ENCODE measurements at regions of chr11 and their contacts with region 1.

Region 1: GRCh38 chr11:95138448-95138847 is 48.8 kb downstream of the ENDOD1 start:
- DNase-seq: no peak
- H3K4me3 ChIP-seq: no peak overlapping the region
- H3K27ac ChIP-seq: no peak overlapping the region
- H3K4me1 ChIP-seq: peaks cover 0 to 5% (median 2%) of the 10 kb centered on the region in 4 donors
- H3K27me3 ChIP-seq: no peaks in the 10 kb centered on the region
- CTCF ChIP-seq: peak in 3 of 5 experiments; percentile 22 to 40 (median 29)
- EP300 ChIP-seq: no peak
- POLR2A ChIP-seq: no peak

Region 2: GRCh38 chr11:94997437-94997836 is 141.0 kb before region 1 on chr11:
- in situ Hi-C with region 1: loop called in 1 of 4 experiments (anchors 25 kb)
- intact Hi-C with region 1: no loop called
- DNase-seq: no peak
- H3K4me3 ChIP-seq: no peak overlapping the region
- H3K27ac ChIP-seq: no peak overlapping the region
- H3K4me1 ChIP-seq: no peaks in the 10 kb centered on the region
- H3K27me3 ChIP-seq: no peaks in the 10 kb centered on the region
- CTCF ChIP-seq: no peak
- EP300 ChIP-seq: no peak
- POLR2A ChIP-seq: no peak

Region 3: DNA sequence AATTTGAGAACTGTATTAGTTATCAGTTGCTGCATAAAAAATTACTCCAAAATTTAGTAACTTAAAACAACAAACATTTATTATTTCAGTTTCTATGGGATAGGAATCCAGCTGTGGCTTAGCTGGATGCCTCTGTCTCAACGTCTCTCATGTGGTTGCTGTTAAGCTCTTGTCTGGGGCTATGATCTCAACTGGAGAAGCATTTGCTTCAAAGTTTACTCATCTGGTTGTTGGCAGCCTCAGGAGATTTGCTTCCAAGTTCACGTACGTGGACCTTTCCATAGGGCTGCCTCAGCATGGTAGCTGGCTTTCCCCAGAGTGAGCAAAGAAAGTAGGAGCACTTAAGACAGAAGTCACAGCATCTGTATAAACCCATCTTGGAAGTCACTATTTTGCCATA is 237.4 kb after region 1 on chr11:
- in situ Hi-C with region 1: no loop called
- intact Hi-C with region 1: no loop called
- DNase-seq: no peak
- H3K4me3 ChIP-seq: no peak overlapping the region
- H3K27ac ChIP-seq: no peak overlapping the region
- H3K4me1 ChIP-seq: no peaks in the 10 kb centered on the region
- H3K27me3 ChIP-seq: no peaks in the 10 kb centered on the region
- CTCF ChIP-seq: no peak
- EP300 ChIP-seq: no peak
- POLR2A ChIP-seq: no peak

Measured in transverse colon (tissue), 4 donors.